HEK293 (cell line): ENCODE measurements at regions of chr19 and their contacts with region 1.

Region 1: DNA sequence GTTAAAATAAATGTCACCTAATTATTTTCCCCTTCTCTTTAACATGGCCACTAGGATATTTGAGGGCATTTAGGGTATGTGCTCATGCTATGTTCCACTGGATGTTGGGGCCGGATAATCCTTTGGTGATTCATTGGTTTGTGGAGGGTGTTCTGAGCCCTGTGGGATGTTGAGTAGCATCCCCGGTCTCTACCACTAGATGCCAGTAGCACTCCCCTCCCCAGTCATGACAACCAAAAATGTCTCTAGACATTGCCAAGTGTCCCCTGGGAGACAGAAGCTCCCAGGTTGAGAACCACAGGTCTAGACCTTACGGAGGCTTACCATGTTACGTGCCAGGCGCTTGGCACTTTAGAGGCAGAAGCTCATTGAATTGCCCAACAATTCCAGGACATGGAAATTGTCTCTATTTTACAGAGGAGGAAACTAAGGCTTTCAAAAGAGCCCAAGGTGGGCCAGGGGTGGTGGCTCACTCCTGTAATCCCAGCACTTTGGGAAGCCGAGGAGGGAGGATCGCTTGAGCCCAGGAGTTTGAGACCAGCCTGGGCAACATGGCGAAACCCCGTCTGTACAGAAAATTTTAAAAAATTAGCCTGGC is 14.1 kb downstream of the SHANK1 start:
- H3K4me3 ChIP-seq: no peak overlapping the region
- H3K27ac ChIP-seq: no peak overlapping the region
- H3K4me1 ChIP-seq: no peaks in the 10 kb centered on the region
- CTCF ChIP-seq: peak; percentile 49; the same call in 1 of the 2 replicates

Region 2: GRCh38 chr19:50669302-50670101 is 36.0 kb before region 1 on chr19:
- CTCF ChIA-PET with region 1: interaction called, 18 read pairs
- POLR2A ChIA-PET with region 1: no interaction called
- H3K4me3 ChIP-seq: no peak overlapping the region
- H3K27ac ChIP-seq: no peak overlapping the region
- H3K4me1 ChIP-seq: no peaks in the 10 kb centered on the region
- CTCF ChIP-seq: peak; percentile 64

Region 3: DNA sequence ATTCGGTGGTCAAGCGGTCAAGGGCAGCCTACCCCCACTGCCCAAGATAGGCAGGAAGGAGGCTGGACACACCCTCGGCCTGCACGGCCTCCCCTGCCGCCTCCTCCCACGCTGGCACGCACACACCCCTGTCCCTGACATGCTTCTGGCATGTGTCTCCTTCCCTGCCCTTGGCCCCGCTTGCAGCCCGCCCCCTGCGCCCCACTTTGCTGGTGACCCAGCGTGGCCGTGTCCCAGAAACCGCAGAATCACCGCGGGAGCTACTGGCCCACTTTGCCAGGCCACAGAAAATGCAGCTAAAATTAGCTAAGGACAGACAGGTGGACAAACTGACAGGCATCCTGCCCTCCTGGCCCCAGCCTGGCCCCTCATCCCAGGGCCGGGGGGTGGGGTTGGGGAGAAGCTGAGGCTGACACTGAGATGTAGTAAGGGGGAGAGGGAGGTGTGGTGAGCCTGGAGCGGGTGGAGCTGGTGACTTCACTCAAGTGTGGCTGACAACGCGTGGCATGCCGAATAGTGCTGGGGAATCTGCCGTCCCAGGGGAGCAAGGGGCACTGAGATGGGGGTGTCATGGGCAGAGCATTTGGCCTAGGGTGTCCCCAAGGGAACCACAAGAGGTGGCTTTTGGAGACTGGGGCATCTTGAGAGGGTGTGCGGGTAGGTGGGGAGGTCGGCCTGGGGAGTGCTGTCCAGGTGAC is 11.7 kb after region 1 on chr19:
- CTCF ChIA-PET with region 1: interaction called, 17 read pairs
- POLR2A ChIA-PET with region 1: no interaction called
- H3K4me3 ChIP-seq: no peak overlapping the region
- H3K27ac ChIP-seq: no peak overlapping the region
- H3K4me1 ChIP-seq: no peaks in the 10 kb centered on the region
- CTCF ChIP-seq: no peak

Region 4: DNA sequence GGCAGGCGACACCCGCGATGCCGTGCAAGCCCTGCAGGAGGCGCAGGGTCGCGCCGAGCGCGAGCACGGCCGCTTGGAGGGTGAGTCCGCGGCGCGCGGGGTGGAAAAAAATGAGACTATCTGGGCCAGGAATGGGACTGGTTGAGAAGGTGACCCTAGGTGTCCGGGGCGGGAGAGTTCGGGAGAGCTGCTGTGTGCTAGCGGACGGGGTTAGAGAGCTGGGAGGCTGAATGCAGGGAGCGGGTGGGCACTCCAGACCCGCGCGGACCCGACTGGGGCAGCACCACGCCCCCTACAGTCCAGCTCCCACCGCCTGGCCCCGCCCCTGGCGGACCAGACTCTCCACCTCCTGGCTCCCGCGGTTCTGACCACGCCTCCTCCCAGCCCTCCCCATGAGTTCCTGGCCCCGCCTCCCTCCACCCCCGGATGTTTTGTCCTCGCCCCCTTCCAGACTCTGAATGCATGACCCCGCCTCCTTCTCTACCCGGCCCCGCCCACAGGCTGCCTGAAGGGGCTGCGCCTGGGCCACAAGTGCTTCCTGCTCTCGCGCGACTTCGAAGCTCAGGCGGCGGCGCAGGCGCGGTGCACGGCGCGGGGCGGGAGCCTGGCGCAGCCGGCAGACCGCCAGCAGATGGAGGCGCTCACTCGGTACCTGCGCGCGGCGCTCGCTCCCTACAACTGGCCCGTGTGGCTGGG is 19.1 kb after region 1 on chr19:
- CTCF ChIA-PET with region 1: interaction called, 31 read pairs
- POLR2A ChIA-PET with region 1: interaction called, 28 read pairs
- H3K4me3 ChIP-seq: peak overlapping the region; percentile 78
- H3K27ac ChIP-seq: peak overlapping the region; percentile 77
- H3K4me1 ChIP-seq: peaks cover 7% of the 10 kb centered on the region; the same call in 1 of the 2 replicates
- CTCF ChIP-seq: peak; percentile 100

Region 5: GRCh38 chr19:50772404-50773311 is 67.1 kb after region 1 on chr19:
- CTCF ChIA-PET with region 1: interaction called, 151 read pairs
- POLR2A ChIA-PET with region 1: no interaction called
- H3K4me3 ChIP-seq: no peak overlapping the region
- H3K27ac ChIP-seq: no peak overlapping the region
- H3K4me1 ChIP-seq: no peaks in the 10 kb centered on the region
- CTCF ChIP-seq: no peak